A549 (cell line): ENCODE measurements at regions of chr6 and their contacts with region 1.

Region 1: GRCh38 chr6:53359072-53359842 is 10.5 kb upstream of the ELOVL5 start:
- DNase-seq: peak; percentile 85 to 95
- ATAC-seq: peak; percentile 94 to 97
- H3K4me3 ChIP-seq: peak overlapping the region; percentile 44
- H3K27ac ChIP-seq: peak overlapping the region; percentile 95 to 98
- H3K4me1 ChIP-seq: peaks cover 39% of the 10 kb centered on the region
- CTCF ChIP-seq: no peak
- EP300 ChIP-seq: peak in 1 of 2 experiments; percentile 37; a peak in 1 of 5 replicates
- POLR2A ChIP-seq: peak; percentile 58
- RAD21 ChIP-seq: no peak

Region 2: DNA sequence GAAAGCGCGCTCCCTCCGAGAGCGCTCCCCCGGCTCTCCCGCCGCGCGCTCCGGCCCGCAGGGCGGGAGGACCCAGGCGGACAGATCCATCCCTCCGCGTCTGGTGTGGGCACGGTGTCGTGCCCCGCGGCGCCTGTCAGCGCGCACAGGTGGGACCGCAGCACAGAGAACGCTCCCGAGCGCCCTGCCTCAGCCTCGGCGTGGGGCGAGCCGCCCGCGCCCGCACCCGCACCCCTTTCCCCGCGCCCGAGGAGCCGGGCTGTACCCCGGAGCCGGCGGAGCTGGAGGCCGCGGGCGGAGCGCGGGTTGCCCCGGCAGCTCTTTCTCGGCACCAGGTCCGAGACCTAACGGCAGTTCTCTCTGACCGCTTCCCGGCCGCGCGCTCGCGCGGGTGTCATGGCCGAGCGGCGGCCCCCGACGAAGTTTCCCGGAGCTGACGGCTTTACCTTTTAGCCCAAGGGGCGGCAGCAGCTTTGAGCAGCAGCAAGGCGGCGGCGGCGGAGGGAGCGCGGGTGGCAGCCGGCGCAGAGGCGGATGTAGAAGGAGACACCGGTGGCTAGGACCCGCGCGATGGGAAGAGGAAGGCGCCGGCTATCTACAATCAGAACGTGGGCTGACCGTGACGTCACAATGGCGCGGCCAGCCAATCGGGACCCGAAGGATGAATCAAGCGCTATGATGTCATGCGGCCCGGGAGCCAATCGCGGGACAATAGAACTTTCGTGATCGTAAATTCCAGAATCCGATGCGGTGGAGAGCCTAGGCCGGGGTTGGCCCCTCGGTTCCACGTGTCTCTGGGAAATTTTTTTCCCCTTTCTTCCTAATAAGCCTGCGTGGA is 10.7 kb before region 1 on chr6 and contains the start of gene ELOVL5:
- CTCF ChIA-PET with region 1: interaction called, 3 read pairs
- POLR2A ChIA-PET with region 1: interaction called, 21 read pairs
- DNase-seq: peak; percentile 81 to 97
- ATAC-seq: peak; percentile 89 to 93
- H3K4me3 ChIP-seq: peak within 1 kb of the TSS; percentile 92
- H3K27ac ChIP-seq: peak within 1 kb of the TSS; percentile 84 to 92
- H3K4me1 ChIP-seq: peaks cover 8% of the 10 kb centered on the region; the same call in 2 of the 3 replicates
- CTCF ChIP-seq: no peak
- EP300 ChIP-seq: no peak
- POLR2A ChIP-seq: peak; percentile 67
- RAD21 ChIP-seq: no peak
- polyA plus RNA-seq, gene ELOVL5: 84.6 and 90.9 TPM in 2 replicates